CD4-positive, alpha-beta memory T cell (primary cell): ENCODE measurements at regions of chr3 and their contacts with region 1.

Region 1: GRCh38 chr3:15120986-15121385 is 22.0 kb upstream of the RBSN start:
- DNase-seq: no peak
- H3K4me3 ChIP-seq: no peak overlapping the region
- H3K4me3 Mint-ChIP-seq: no peak overlapping the region
- H3K27ac ChIP-seq: no peak overlapping the region
- H3K27ac Mint-ChIP-seq: no peak overlapping the region
- H3K4me1 ChIP-seq: no peaks in the 10 kb centered on the region
- H3K4me1 Mint-ChIP-seq: peaks cover 0 to 5% (median under 1%) of the 10 kb centered on the region in 4 donors
- H3K27me3 ChIP-seq: no peaks in the 10 kb centered on the region
- H3K27me3 Mint-ChIP-seq: peaks cover 0 to 3% of the 10 kb centered on the region in 2 donors

Region 2: GRCh38 chr3:15098503-15099363 is 22.3 kb before region 1 on chr3 and contains the start of gene RBSN:
- CTCF ChIA-PET with region 1: interaction called, 17 read pairs
- POLR2A ChIA-PET with region 1: interaction called, 6 read pairs
- intact Hi-C with region 1: no loop called
- DNase-seq: peak; percentile 96 to 98 (median 96)
- H3K4me3 ChIP-seq: peak within 1 kb of the TSS; percentile 61 to 73
- H3K4me3 Mint-ChIP-seq: peak within 1 kb of the TSS; percentile 88 to 99 (median 96)
- H3K27ac ChIP-seq: peak within 1 kb of the TSS; percentile 95
- H3K27ac Mint-ChIP-seq: peak within 1 kb of the TSS; percentile 89 to 99 (median 99)
- H3K4me1 ChIP-seq: peaks cover 22% of the 10 kb centered on the region
- H3K4me1 Mint-ChIP-seq: peaks cover 19 to 35% (median 27%) of the 10 kb centered on the region in 4 donors
- H3K27me3 ChIP-seq: no peaks in the 10 kb centered on the region
- H3K27me3 Mint-ChIP-seq: peaks cover 1 to 2% of the 10 kb centered on the region in 2 donors
- total RNA-seq, gene RBSN: 33.2 to 34.7 TPM